Gastrocnemius medialis (tissue), 4 donors: ENCODE measurements at regions of chr17 and their contacts with region 1.

Region 1: GRCh38 chr17:28763804-28764266 is 20.0 kb downstream of the TRAF4 start:
- DNase-seq: peak; percentile 55 to 72
- ATAC-seq: peak; percentile 53 to 67
- H3K4me3 ChIP-seq: no peak overlapping the region
- H3K27ac ChIP-seq: peak overlapping the region in 3 of 4 donors; percentile 29 to 55 (median 40)
- H3K4me1 ChIP-seq: peaks cover 4 to 12% of the 10 kb centered on the region in 2 donors
- H3K27me3 ChIP-seq: no peaks in the 10 kb centered on the region
- CTCF ChIP-seq: peak; percentile 83 to 93 (median 87)
- POLR2A ChIP-seq: no peak

Region 2: DNA sequence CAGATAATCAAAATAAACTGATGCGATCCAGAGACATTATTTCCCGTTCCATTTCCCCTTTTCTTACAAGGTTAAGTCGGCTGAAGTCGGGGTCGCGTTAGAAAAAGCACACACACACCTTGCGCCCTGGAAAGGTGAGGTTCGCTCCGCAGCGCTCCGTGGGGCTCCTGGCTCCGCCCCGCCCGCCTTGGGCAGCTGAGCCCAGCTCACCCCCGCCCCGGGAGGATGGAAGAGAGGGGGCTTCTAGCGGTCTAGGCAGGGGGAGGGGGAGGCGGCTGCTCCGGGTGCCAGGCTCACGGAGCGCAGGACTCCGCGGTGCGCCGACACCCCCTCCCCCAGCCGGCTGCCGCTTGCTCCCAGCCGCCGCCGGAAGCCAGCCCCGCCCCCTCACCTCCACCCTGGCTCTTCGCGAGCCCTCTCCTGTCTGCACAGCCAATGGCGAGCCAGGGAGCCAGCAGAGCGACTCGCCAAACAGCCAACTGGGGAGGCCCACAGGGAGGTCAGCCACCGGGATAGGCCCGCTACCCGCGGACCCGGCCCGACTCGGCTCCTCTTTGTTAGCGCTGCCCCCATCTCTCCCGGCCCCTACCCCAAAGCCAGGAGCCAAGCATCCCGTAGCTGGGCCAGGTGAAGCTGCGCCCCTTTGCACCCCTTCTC is 48.4 kb after region 1 on chr17:
- in situ Hi-C with region 1: no loop called
- intact Hi-C with region 1: loop called (anchors 5 kb)
- DNase-seq: peak; percentile 98
- ATAC-seq: peak; percentile 84 to 87
- H3K4me3 ChIP-seq: peak overlapping the region; percentile 79 to 95 (median 89)
- H3K27ac ChIP-seq: peak overlapping the region; percentile 93 to 94 (median 94)
- H3K4me1 ChIP-seq: peaks cover 37 to 44% of the 10 kb centered on the region in 2 donors
- H3K27me3 ChIP-seq: no peaks in the 10 kb centered on the region
- CTCF ChIP-seq: no peak
- POLR2A ChIP-seq: peak; percentile 81 to 85

Region 3: DNA sequence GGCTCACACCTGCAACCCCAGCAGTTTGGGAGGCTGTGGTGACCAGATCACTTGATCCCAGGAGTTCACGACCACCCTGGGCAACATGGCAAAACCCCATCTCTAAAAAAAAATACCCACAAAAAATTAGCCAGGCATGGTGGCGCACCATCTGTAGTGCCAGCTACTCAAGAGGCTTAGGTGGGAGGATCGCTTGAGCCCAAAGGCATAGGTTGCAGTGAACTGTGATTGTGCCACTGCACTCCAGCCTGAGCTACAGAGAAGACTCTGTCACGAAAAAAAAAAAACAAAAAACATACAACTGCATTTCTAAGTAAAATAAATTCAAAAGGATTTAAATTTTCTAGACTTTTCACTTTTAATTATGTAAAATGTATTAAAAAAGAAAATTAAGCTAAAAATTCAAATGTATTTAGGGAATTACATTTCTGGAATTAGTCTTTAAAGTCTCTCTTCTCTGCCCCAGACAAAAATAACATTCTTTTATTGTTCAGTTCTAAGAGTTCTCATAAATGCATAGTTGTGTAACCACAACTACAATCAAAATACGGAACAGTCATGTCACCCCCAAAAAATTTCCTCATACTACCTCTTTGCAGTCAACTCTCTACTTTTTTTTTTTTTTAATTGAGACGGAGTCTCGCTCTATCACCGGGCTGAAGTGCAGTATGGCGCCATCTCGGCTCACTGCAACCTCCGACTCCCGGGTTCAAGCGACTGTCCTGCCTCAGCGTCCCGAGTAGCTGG is 64.6 kb after region 1 on chr17:
- in situ Hi-C with region 1: loop called in 1 of 4 experiments (anchors 10 kb)
- intact Hi-C with region 1: no loop called
- DNase-seq: no peak
- ATAC-seq: no peak
- H3K4me3 ChIP-seq: no peak overlapping the region
- H3K27ac ChIP-seq: no peak overlapping the region
- H3K4me1 ChIP-seq: no peaks in the 10 kb centered on the region
- H3K27me3 ChIP-seq: no peaks in the 10 kb centered on the region
- CTCF ChIP-seq: no peak
- POLR2A ChIP-seq: no peak

Region 4: DNA sequence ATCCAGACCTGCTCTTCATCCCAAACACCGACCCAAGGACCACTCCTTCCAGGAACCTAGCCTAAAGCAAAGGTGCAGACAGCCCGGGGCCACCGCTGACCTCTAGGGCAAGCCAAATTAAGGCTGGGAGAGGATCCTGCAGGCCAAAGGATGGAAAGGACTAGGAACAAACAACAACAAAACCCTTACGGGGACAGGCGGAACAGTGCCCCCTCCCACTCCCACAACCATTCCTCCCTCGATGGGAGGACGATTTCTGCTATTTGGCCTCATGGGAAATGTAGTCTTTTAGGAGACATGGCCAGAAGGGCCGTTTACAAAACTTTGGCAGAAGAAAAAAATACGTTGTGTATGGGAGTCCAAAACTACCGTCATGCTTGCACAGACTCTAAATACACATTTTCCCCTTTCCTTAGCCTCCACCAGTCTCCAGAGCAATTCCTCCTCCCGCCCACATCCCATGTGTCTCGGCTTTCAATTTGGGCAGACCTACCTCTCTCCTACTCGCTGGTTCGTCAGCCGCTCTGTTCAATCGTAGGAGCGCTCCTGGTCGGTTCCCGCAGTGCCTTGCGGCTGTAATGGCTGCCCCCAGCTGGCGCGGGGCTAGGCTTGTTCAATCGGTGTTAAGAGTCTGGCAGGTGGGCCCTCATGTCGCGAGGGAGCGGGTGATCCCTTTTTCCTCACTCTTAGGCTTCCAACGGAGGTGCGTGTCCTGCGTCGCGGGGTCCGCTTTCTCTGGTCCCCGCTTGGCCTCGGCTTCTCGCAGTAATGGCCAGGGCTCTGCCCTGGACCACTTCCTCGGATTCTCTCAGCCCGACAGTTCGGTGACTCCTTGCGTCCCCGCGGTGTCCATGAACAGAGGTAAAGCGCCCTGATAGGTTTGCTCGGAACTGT is 90.9 kb after region 1 on chr17 and contains the start of gene ERAL1:
- in situ Hi-C with region 1: loop called (anchors 5 to 25 kb)
- intact Hi-C with region 1: loop called (anchors 1 kb)
- DNase-seq: peak; percentile 81 to 82
- ATAC-seq: peak; percentile 99
- H3K4me3 ChIP-seq: peak within 1 kb of the TSS; percentile 63 to 85 (median 75)
- H3K27ac ChIP-seq: peak within 1 kb of the TSS; percentile 77 to 85 (median 82)
- H3K4me1 ChIP-seq: peaks cover 7 to 11% of the 10 kb centered on the region in 2 donors
- H3K27me3 ChIP-seq: no peaks in the 10 kb centered on the region
- CTCF ChIP-seq: peak in 1 of 5 experiments; percentile 18
- POLR2A ChIP-seq: peak; percentile 60 to 75
- total RNA-seq, gene ERAL1: 35.1 to 69.2 (median 64.1) TPM

Region 5: DNA sequence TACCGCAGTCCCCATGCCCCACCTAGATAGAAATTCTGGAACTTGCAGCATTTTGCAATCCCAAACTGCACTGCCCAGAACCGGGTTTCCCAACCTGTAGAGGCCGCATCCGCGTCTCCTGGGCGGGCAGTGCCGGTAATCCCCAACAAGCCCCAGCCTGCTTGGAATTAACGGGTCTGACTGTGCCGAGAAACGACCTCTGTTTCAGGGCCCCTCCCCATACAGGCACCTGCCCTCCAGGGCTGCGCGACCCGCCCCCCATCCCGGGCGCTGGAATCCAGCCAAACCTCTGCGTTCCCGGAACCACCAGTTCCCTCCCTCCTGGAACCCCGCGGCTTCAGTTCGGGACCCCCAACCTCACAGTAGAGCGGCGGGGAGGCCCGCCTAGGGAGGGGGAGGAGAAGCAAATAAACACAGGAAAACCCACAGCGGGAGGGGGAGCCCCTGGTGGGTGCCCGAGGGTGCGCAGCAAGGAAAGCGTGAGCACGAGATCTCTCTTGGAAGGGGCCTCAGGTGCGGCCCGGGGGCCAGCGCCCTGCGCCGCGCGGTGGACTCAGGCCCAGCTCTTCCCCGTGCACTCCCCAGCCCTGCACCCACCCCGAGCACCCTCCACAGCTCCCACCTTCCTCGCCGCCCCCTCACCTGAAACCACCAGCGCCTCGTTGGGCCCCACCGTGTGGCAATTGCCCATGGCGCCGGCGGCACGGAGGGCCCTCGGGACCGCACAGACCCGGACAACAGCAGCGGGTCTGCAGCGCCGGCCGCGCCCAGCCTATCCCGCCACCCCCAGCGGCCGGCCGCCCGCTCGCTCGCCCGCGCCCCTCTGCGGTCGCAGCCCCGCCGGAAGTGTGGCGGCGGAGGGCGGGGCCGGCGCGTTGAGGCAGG is 133.3 kb after region 1 on chr17 and contains the start of gene FLOT2:
- in situ Hi-C with region 1: loop called in 1 of 4 experiments (anchors 10 kb)
- intact Hi-C with region 1: loop called (anchors 2 kb)
- DNase-seq: peak; percentile 29 to 53
- ATAC-seq: peak; percentile 63 to 70
- H3K4me3 ChIP-seq: peak within 1 kb of the TSS; percentile 70 to 92 (median 84)
- H3K27ac ChIP-seq: peak within 1 kb of the TSS; percentile 82 to 89 (median 85)
- H3K4me1 ChIP-seq: peaks cover 23 to 26% of the 10 kb centered on the region in 2 donors
- H3K27me3 ChIP-seq: no peaks in the 10 kb centered on the region
- CTCF ChIP-seq: peak; percentile 19 to 51 (median 37)
- POLR2A ChIP-seq: peak; percentile 17 to 43
- total RNA-seq, gene FLOT2: 15.3 to 37.9 (median 28.4) TPM

Region 6: DNA sequence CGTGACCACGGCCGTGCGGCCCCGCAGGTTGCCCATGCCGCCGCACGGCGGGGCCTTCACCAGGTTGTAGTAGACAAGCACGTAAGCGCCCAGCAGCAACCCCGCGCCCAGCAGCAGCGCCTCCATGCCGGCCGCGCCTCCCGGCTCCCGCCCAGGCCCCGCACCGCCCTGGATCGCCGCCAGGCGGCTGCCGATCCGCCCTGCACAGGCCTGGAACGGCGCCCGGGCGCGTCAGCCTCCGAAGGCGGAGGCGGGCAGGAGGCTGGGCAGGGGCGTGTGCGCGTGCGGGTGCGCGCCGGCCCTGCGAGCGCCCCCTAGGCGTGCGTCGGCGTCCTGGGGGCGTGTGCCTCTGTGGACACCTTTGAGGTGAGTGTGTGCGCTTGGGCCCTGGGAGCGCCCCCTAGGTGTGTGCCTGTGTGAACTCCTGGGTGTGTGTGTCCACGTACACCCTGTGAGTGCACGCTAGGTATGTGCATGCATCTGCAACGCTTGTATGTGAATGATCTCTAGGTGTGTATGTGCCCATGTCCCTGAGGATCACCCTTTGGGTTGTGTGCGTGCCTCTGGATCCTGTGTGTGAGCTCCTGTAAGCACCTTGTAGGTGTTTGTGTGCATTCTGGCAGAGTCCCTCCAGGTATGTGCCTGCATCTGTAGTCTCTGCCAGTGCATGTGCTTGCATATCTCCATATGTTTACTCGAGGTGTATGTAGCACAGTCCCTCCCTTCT is 139.1 kb after region 1 on chr17 and contains the start of gene DHRS13:
- in situ Hi-C with region 1: loop called in 1 of 4 experiments (anchors 10 kb)
- intact Hi-C with region 1: loop called (anchors 2 kb)
- DNase-seq: peak; percentile 51 to 73
- ATAC-seq: peak; percentile 87 to 88
- H3K4me3 ChIP-seq: peak within 1 kb of the TSS; percentile 61 to 84 (median 70)
- H3K27ac ChIP-seq: peak within 1 kb of the TSS; percentile 68 to 83 (median 80)
- H3K4me1 ChIP-seq: peaks cover 13 to 24% of the 10 kb centered on the region in 2 donors
- H3K27me3 ChIP-seq: no peaks in the 10 kb centered on the region
- CTCF ChIP-seq: peak; percentile 72 to 85 (median 82)
- POLR2A ChIP-seq: no peak
- total RNA-seq, gene DHRS13: 0.25 to 3.7 (median 2.4) TPM

Region 7: GRCh38 chr17:28916302-28916934 is 152.6 kb after region 1 on chr17:
- in situ Hi-C with region 1: loop called in 2 of 4 experiments (anchors 10 kb)
- intact Hi-C with region 1: loop called (anchors 5 kb)
- DNase-seq: peak in 1 of 2 donors; percentile 52
- ATAC-seq: peak in 1 of 2 donors; percentile 74
- H3K4me3 ChIP-seq: no peak overlapping the region
- H3K27ac ChIP-seq: peak overlapping the region; percentile 66 to 79 (median 72)
- H3K4me1 ChIP-seq: peaks cover 0 to 15% of the 10 kb centered on the region in 2 donors
- H3K27me3 ChIP-seq: no peaks in the 10 kb centered on the region
- CTCF ChIP-seq: peak; percentile 63 to 72 (median 70)
- POLR2A ChIP-seq: no peak